ENCODE measurements at regions of chr1 and their contacts with region 1.

Region 1: GRCh38 chr1:84620720-84621313 is 46.6 kb upstream of the CTBS start:
- DNase-seq: peak; percentile 87
- H3K4me3 ChIP-seq: peak overlapping the region; percentile 73
- H3K27ac ChIP-seq: peak overlapping the region; percentile 38
- H3K4me1 ChIP-seq: peaks cover 9% of the 10 kb centered on the region
- CTCF ChIP-seq: peak; percentile 100

Region 2: GRCh38 chr1:84442256-84442655 is 178.6 kb before region 1 on chr1:
- CTCF ChIA-PET with region 1: no interaction called
- POLR2A ChIA-PET with region 1: no interaction called
- intact Hi-C with region 1: loop called (anchors 2 kb)
- DNase-seq: peak; percentile 60
- H3K4me3 ChIP-seq: no peak overlapping the region
- H3K27ac ChIP-seq: no peak overlapping the region
- H3K4me1 ChIP-seq: peaks cover 6% of the 10 kb centered on the region
- CTCF ChIP-seq: peak; percentile 80

Region 3: GRCh38 chr1:84573967-84574842 is 46.6 kb before region 1 on chr1 and contains the start of gene CTBS:
- CTCF ChIA-PET with region 1: no interaction called
- POLR2A ChIA-PET with region 1: interaction called, 6 read pairs
- intact Hi-C with region 1: loop called (anchors 1 kb)
- DNase-seq: peak; percentile 95
- H3K4me3 ChIP-seq: peak within 1 kb of the TSS; percentile 72
- H3K27ac ChIP-seq: peak within 1 kb of the TSS; percentile 81
- H3K4me1 ChIP-seq: peaks cover 20% of the 10 kb centered on the region
- CTCF ChIP-seq: no peak
- total RNA-seq, gene CTBS: 4.5 and 5.9 TPM in 2 replicates

Region 4: DNA sequence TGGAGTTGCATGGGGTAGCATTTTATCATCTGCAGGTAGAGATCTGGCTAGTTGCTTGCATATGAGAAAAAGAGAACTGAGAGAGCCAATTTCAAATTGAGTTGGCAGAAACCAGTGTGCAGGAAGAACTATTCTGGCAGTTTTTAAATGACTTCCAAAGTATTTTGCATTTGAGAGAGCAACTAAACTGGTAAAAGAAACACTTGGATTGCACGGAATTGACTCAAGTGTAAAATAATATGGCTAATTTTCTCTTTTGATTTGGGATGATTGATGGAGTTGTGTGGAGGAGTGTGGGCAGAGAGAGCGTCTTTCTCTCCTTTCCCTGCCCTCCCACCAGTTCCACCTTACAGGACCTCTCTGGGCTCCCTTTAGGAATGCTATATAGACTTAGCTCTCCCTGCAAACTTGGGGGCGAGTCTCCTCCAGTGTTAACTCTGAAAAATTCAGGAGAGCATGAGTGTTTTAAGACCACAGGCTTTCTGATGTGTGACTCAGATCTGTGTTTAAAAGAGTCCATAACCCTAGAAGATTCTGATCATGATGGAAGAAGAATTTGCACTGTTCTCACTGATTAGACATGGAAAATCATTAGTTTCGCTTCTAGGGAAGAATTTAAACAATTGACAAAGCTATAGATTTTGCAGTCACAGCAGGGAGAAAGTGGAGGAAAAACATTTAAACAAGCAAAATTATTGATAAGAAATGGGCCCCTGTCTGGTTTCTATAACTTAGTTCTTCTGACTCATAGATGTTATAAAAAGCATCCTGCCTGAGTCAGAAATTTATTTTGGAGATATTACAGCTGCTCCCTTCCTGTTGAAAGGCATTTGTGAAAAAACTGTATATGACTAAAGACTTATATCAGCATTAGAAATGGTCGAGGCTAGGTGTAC is 21.7 kb before region 1 on chr1:
- CTCF ChIA-PET with region 1: no interaction called
- POLR2A ChIA-PET with region 1: no interaction called
- intact Hi-C with region 1: loop called (anchors 2 kb)
- DNase-seq: peak; percentile 15
- H3K4me3 ChIP-seq: no peak overlapping the region
- H3K27ac ChIP-seq: no peak overlapping the region
- H3K4me1 ChIP-seq: peaks cover 8% of the 10 kb centered on the region
- CTCF ChIP-seq: no peak

Region 5: GRCh38 chr1:84690397-84691121 is 69.7 kb after region 1 on chr1 and contains the start of gene SSX2IP:
- CTCF ChIA-PET with region 1: no interaction called
- POLR2A ChIA-PET with region 1: no interaction called
- intact Hi-C with region 1: loop called (anchors 2 kb)
- DNase-seq: peak; percentile 97
- H3K4me3 ChIP-seq: peak within 1 kb of the TSS; percentile 84
- H3K27ac ChIP-seq: peak within 1 kb of the TSS; percentile 77
- H3K4me1 ChIP-seq: peaks cover 48% of the 10 kb centered on the region
- CTCF ChIP-seq: no peak
- total RNA-seq, gene SSX2IP: 24.1 and 29.9 TPM in 2 replicates

Measured in OCI-LY7 (cell line).